Dendritic cell treated with granulocyte-macrophage colony-stimulating factor and Interleukin-4, amounts not matched to agents 40 ng/mL and 50 ng/mL, for 4 days (primary cell): ENCODE measurements at regions of chr5 and their contacts with region 1.

Region 1: DNA sequence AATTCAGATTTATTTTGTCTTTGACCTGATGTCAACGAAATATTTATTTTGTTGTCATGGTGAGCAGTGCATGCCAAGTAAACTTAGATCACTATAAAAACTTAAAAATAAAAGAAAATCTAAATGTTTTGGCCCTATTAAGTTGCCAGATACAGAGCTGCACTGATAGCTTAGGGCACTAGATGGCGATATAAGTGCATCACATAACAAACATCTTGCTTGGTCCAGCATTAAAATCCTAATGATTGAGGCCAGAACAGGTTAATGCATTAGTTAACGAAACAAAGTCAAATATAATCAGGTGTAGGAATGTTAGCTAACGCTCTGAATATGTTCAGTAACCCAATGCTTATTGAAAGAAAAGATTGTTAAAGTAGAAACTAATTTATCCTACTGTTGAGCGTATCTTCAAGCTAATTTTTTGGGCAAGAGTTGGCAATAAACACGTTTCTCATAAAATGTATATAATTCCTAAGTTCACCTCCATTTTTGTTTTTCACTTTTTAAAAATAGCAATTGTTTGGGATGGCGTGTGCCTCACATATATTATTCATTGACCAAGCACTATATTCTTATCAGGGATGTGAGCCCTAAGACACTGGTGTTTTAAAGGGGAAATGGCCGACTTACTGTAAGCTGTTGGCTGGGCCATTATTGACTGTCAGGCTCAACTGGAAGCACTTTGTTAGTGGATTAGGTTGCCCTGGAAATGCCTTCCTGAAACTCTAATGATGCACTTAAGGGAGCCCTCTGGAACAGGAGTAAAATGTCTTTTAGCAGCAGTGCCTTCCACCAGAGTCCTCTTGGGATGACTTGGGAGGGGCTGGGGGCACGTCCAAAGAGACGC is 33.3 kb downstream of the KCTD16 start:
- H3K4me3 Mint-ChIP-seq: no peak overlapping the region
- H3K27ac Mint-ChIP-seq: no peak overlapping the region
- H3K4me1 Mint-ChIP-seq: peaks cover 5% of the 10 kb centered on the region
- H3K27me3 Mint-ChIP-seq: peaks cover 34% of the 10 kb centered on the region

Region 2: GRCh38 chr5:145090115-145090514 is 886.1 kb after region 1 on chr5:
- intact Hi-C with region 1: loop called (anchors 10 kb)
- H3K4me3 Mint-ChIP-seq: no peak overlapping the region
- H3K27ac Mint-ChIP-seq: no peak overlapping the region
- H3K4me1 Mint-ChIP-seq: no peaks in the 10 kb centered on the region
- H3K27me3 Mint-ChIP-seq: no peaks in the 10 kb centered on the region

Region 3: DNA sequence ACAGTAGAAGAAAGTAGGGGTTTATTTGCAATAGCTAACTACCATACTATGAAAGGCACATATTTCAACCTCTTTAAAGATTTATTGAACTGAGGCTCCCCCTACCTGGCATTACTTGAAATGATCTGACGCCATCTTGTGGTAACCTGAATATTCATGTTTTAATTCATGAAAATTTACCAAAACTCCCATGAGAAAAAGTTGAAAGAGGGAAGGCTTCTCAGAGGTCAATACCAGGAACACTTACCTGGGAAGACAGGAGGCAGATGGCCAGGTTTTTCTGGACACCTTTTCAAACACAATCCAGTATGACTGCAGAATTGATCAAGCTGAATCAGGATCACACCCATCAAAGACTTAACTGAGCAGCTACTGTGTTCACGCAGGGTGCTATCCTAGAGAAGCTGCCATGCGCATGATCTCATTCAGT is 1621.8 kb after region 1 on chr5:
- intact Hi-C with region 1: loop called (anchors 2 kb)
- H3K4me3 Mint-ChIP-seq: no peak overlapping the region
- H3K27ac Mint-ChIP-seq: no peak overlapping the region
- H3K4me1 Mint-ChIP-seq: no peaks in the 10 kb centered on the region
- H3K27me3 Mint-ChIP-seq: no peaks in the 10 kb centered on the region

Region 4: DNA sequence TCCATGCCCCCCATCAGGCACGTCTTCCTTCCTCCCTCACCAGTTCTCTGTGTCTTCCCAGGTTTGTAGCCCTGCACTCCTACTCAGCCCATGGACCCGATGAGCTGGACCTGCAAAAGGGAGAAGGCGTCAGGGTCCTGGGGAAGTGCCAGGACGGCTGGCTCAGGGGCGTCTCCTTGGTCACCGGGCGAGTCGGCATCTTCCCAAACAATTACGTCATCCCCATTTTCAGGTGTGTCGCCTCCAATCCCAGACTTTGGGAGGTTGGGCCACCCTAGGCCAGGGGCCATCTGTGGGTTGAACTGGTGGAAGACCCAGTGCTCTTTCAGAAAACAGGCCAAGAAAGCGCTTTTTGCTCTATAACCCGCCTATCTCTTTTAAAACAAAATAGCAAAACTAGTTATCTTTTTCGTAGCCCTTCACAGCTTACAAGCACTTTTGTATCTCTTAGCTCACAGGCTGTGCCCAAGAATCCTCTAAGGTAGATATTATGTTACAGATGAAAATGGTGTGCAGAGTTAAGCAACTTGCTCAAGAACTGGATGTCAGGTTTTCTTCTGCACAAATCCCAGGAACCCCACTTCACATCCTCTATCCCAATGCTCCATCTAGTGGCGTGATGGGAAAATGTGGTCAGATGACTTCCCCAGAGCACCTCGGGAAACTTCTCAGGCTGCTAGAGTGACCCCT is 1845.2 kb after region 1 on chr5:
- intact Hi-C with region 1: loop called (anchors 1 kb)
- H3K4me3 Mint-ChIP-seq: no peak overlapping the region
- H3K27ac Mint-ChIP-seq: peak overlapping the region; percentile 0
- H3K4me1 Mint-ChIP-seq: no peaks in the 10 kb centered on the region
- H3K27me3 Mint-ChIP-seq: no peaks in the 10 kb centered on the region

Region 5: DNA sequence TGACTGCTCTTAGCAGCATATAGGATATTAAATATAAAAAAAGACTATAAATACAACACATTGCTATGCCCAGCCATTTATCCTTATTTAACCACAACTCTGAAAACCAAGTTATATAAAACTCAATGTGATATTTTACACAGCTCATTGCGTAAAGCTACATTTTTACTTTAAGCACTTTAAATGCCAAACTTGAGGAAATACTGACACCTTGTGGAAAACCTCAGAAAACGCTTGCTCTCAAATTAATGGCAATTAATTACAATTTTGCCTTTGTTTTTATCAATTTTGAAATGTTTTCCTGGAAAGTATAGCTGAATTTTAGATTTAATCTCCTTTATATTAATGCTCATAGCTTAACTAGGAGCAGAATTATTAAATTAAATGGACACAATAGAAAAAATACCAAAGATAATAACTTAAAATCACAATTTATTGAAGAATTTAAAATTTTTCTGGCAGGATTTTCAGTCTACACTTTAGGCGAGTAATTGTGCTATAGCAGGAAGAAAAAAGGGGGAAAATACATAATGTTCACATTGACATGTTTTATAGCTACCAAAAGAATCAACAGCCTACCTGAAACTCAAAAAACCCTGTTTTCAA is 1926.6 kb after region 1 on chr5:
- intact Hi-C with region 1: loop called (anchors 10 kb)
- H3K4me3 Mint-ChIP-seq: no peak overlapping the region
- H3K27ac Mint-ChIP-seq: no peak overlapping the region
- H3K4me1 Mint-ChIP-seq: no peaks in the 10 kb centered on the region
- H3K27me3 Mint-ChIP-seq: no peaks in the 10 kb centered on the region